ENCODE measurements at regions of chr5 and their contacts with region 1.

Region 1: DNA sequence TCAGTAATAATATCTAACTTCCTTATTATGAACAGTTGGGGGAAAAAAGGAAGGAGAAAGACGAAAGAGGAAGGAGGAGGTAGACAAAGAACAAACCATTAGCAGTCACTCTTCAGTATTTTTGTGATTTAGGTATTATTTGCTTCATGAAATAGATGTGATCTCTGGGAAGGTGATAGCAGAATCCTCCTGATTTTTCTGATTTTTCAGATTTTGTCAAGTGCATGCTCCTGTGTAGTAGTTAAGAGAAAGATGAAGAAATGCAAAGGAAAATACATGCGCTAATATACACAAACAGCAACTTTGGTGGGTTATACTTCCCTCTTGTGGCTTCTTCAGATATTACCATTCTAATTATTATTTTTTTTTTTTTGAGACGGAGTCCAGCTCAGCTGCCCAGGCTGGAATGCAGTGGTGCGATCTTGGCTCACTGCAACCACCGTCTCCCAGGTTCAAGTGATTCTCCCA is 31.6 kb downstream of the LMNB1 start:
- DNase-seq: no peak
- H3K4me3 Mint-ChIP-seq: no peak overlapping the region
- H3K27ac Mint-ChIP-seq: peak overlapping the region; percentile 39
- H3K4me1 Mint-ChIP-seq: peaks cover 43% of the 10 kb centered on the region
- H3K27me3 Mint-ChIP-seq: no peaks in the 10 kb centered on the region

Region 2: DNA sequence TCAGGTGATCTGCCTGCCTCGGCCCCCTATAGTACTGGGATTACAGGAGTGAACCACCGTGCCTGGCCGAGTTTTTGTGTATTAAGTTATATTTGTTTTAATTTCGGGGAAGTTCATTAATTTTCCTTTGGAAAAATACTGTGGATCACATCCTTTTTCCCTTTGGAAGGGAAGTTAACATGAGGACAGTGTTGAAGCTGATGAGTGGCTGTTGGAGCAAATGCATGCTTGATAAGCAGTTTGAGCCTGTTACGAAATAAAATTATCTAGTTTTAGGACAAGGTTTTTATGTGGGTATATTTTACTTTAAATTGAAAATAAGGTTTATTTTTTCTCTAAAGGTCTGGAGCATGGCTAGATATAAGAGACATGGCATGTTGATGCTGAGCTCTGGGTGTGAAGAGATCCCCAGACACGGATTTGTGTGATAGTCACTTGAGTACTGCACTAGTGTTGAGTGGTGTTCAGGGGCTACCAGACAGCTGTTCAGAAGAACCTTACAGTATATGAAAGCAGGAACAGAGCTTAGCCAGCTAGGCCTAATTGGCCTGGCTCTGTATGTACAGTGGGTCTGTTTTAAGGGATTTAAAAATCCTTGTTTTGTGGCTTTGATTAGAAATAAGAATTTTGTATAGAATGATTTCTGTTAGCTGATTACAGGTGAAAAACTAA is 14.3 kb before region 1 on chr5:
- intact Hi-C with region 1: loop called (anchors 2 kb)
- DNase-seq: no peak
- H3K4me3 Mint-ChIP-seq: no peak overlapping the region
- H3K27ac Mint-ChIP-seq: peak overlapping the region; percentile 50
- H3K4me1 Mint-ChIP-seq: peaks cover 47% of the 10 kb centered on the region
- H3K27me3 Mint-ChIP-seq: no peaks in the 10 kb centered on the region

Region 3: DNA sequence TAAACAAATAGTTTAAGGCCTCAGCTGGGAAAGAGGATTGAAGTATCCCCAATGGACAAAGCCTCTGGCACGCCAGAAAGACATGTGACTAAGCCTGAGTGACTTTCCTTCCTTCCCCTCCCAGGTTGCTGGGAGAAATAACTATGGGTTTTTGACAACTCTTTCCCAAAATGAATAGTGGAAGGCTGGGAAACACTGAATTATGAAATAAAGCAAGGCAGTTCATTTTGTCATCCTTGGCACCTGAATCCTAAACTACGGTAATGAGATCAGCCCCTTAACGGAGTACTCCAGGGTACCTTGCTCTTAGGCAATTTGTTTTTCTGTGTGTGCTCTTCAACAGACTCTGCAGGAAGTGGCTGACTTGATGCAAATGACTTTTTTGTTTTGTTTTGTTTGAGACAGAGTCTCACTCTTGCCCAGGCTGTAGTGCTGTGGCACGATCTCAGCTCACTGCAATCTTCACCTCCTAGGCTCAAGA is 43.6 kb after region 1 on chr5:
- intact Hi-C with region 1: loop called (anchors 2 kb)
- DNase-seq: no peak
- H3K4me3 Mint-ChIP-seq: peak overlapping the region; percentile 43
- H3K27ac Mint-ChIP-seq: peak overlapping the region; percentile 68
- H3K4me1 Mint-ChIP-seq: peaks cover 40% of the 10 kb centered on the region
- H3K27me3 Mint-ChIP-seq: no peaks in the 10 kb centered on the region

Region 4: DNA sequence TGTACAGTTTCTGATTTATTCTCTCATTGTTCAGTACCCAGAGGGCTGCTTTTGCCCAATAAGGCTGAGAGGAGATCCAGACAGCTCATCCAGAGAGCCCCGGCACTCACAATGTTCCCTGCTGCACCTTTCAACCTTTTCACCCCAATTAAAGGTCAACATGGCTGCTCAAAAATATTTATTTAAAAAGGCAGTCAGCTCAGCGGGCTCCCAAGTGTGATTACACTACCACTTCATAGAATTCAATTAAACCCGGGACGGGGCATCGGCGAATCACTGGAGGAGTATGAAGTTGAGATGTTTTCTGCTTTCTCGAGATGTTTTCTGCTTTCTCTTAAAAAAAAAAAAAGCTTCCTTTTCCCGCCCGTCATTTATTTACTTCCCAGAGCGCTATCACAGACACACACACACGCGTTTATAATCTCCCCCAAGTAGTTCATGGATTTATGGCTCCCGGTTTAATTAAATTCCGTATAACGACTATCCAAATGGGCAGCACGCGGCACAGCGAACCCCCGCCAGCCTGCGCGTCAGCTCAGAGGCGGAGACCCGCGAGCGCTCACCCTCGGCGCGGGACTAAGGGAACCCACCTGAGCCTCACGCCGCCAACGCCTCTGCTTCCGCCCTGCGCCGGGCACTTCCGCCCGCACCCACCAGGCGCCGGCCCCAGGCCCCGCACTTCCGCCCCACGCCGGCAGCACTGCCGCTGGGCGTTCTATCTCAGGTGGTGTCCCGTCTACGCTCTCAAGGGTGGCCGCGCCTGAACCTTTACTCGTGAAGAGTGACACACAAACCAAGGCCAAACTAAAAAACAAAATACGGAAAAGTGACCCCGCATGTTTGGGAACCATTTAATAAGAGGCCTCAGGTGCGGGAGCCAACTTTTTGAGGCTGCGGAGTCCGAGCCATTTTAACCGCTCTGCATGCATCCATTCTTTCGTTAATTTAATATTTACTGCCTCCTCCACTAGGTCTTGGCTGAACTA is 264.6 kb after region 1 on chr5 and contains the start of gene C5orf63:
- intact Hi-C with region 1: no loop called
- DNase-seq: peak; percentile 68
- H3K4me3 Mint-ChIP-seq: peak within 1 kb of the TSS; percentile 94
- H3K27ac Mint-ChIP-seq: peak within 1 kb of the TSS; percentile 91
- H3K4me1 Mint-ChIP-seq: peaks cover 22% of the 10 kb centered on the region
- H3K27me3 Mint-ChIP-seq: no peaks in the 10 kb centered on the region
- total RNA-seq, gene C5orf63: 6.1 and 6.4 TPM in 2 replicates